PC-9 (cell line): ENCODE measurements at regions of chr5 and their contacts with region 1.

Region 1: GRCh38 chr5:157743163-157744050 is at the start of gene LSM11:
- DNase-seq: peak; percentile 66 to 94
- H3K4me3 ChIP-seq: peak within 1 kb of the TSS; percentile 89
- H3K27ac ChIP-seq: no peak within 1 kb of the TSS
- H3K4me1 ChIP-seq: peaks cover 12% of the 10 kb centered on the region
- H3K27me3 ChIP-seq: no peaks in the 10 kb centered on the region
- CTCF ChIP-seq: peak; percentile 95
- total RNA-seq, gene LSM11: 1.9 and 2.1 TPM in 2 replicates

Region 2: DNA sequence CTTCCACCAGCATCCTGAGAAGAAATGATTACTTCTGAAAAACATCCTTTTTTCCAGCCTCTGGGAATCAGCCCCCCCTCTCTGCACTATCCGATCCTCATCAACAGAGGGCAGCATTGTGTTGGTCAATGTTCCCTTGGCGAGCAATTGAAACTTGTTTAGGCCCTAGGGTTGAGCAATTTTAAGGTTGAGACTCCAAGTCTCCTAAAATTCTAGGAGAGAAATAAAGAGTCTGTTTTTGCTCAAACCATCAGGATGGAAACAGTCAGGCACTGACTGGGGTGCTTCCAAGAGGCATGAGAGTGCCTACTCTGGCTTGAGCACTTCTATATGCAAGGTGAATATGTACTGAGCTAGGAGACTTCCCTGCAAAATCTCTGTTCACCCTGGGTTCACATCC is 489.9 kb before region 1 on chr5:
- CTCF ChIA-PET with region 1: no interaction called
- POLR2A ChIA-PET with region 1: no interaction called
- intact Hi-C with region 1: loop called (anchors 1 kb)
- DNase-seq: peak in 1 of 2 experiments; percentile 38
- H3K4me3 ChIP-seq: no peak overlapping the region
- H3K27ac ChIP-seq: no peak overlapping the region
- H3K4me1 ChIP-seq: no peaks in the 10 kb centered on the region
- H3K27me3 ChIP-seq: peaks cover 18% of the 10 kb centered on the region; the same call in 1 of the 2 replicates
- CTCF ChIP-seq: peak; percentile 88

Region 3: DNA sequence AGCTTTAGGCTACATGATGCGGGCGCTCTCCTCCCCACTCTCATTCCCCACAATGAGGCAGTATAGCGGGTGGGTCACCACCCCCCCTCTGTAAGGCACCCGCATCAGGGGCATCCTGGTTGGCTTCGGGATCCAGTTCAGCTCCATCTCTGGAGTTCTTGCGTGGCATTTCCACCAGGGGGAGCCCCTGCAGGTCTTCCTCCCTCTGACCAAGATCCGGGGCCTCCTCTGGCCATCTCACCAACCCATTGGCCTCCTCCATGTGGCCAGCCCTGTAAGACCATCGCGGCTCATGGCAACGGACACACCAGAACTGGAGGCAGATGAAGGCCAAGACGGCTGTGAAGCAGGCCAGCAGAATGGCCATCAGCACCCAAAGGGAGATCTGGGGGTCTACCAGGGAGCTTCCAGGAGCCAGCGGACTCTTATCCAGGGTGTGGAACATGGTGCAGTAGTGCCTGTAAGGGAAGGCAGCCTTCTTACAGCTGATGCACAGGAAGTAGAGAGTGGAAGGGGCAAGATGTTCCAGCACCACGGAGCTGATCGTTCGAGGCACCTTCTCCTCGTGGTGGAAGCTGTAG is 400.5 kb before region 1 on chr5:
- CTCF ChIA-PET with region 1: no interaction called
- POLR2A ChIA-PET with region 1: no interaction called
- intact Hi-C with region 1: loop called (anchors 5 kb)
- DNase-seq: peak in 1 of 2 experiments; percentile 49
- H3K4me3 ChIP-seq: no peak overlapping the region
- H3K27ac ChIP-seq: no peak overlapping the region
- H3K4me1 ChIP-seq: no peaks in the 10 kb centered on the region
- H3K27me3 ChIP-seq: peaks cover 22% of the 10 kb centered on the region; the same call in 1 of the 2 replicates
- CTCF ChIP-seq: peak; percentile 74

Region 4: GRCh38 chr5:157431544-157432200 is 311.7 kb before region 1 on chr5:
- CTCF ChIA-PET with region 1: interaction called, 3 read pairs
- POLR2A ChIA-PET with region 1: no interaction called
- intact Hi-C with region 1: loop called (anchors 2 kb)
- DNase-seq: no peak
- H3K4me3 ChIP-seq: no peak overlapping the region
- H3K27ac ChIP-seq: no peak overlapping the region
- H3K4me1 ChIP-seq: no peaks in the 10 kb centered on the region
- H3K27me3 ChIP-seq: no peaks in the 10 kb centered on the region
- CTCF ChIP-seq: peak; percentile 63

Region 5: GRCh38 chr5:157731272-157732129 is 11.9 kb before region 1 on chr5 and contains the start of gene THG1L:
- CTCF ChIA-PET with region 1: interaction called, 14 read pairs
- POLR2A ChIA-PET with region 1: no interaction called
- intact Hi-C with region 1: no loop called
- DNase-seq: peak; percentile 94 to 98
- H3K4me3 ChIP-seq: peak within 1 kb of the TSS; percentile 69
- H3K27ac ChIP-seq: peak within 1 kb of the TSS; percentile 80
- H3K4me1 ChIP-seq: 0 out of 2 replicates have a peak, but pooled peaks cover 4% of the 10 kb centered on the region
- H3K27me3 ChIP-seq: no peaks in the 10 kb centered on the region
- CTCF ChIP-seq: no peak
- total RNA-seq, gene THG1L: 20.9 and 25.3 TPM in 2 replicates

Region 6: DNA sequence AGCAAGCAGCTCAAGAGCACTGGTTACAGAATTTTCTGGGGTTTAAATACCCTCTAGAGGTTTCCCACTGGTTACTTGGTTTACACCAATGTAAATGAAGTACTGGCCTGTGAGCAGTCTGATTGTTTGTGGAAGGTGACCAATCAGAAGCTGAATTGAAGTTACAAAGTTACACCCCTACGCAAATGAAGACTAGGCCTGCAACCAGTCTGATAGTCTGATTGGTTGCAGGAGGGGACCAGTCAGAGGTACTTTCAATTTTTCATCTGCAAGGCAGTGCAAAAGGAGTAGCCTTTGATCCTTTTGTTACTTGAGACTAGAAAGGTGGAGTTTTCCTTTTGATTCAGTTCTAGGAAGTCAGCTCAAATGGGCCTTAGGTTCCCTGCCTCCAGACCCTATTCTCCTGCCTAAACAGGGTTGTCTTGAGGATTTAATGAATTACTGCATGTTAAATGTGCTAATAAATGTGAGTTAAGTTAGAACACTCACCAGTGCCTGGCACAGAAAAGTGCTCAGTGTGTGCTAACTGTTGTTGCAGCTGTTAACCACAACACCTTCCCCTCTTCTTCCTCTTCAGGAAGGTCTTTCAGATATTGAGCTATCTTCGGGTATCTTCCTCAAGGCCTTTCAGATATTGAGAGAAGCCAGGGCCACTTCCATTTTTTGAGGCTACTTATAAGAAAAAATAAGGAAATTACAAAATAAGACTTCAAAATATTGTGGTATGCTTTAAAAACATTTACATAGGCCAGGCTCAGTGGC is 147.6 kb after region 1 on chr5:
- CTCF ChIA-PET with region 1: no interaction called
- POLR2A ChIA-PET with region 1: no interaction called
- intact Hi-C with region 1: no loop called
- DNase-seq: no peak
- H3K4me3 ChIP-seq: no peak overlapping the region
- H3K27ac ChIP-seq: no peak overlapping the region
- H3K4me1 ChIP-seq: peaks cover 16% of the 10 kb centered on the region
- H3K27me3 ChIP-seq: no peaks in the 10 kb centered on the region
- CTCF ChIP-seq: no peak

Region 7: DNA sequence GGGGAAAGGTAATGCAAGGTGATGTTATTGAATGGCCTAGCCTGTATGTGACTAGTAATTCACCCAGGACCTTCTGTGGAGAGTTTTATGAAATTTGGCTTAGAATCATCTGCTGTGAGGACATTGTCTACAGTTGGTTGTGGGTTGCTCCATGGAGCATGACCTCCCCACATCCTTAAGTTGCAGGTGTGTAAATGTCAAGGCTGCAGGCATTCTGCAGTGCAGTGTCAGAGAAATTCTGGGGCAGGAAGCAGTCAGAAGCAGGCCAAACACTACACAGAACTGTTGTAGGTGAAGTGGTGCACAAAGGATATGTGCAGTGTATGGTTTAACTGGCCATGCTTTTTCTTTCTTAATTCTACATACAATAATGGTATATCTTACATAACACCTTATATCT is 768.0 kb after region 1 on chr5:
- CTCF ChIA-PET with region 1: no interaction called
- POLR2A ChIA-PET with region 1: no interaction called
- intact Hi-C with region 1: no loop called
- DNase-seq: no peak
- H3K4me3 ChIP-seq: no peak overlapping the region
- H3K27ac ChIP-seq: no peak overlapping the region
- H3K4me1 ChIP-seq: no peaks in the 10 kb centered on the region
- H3K27me3 ChIP-seq: no peaks in the 10 kb centered on the region
- CTCF ChIP-seq: no peak